ENCODE measurements at regions of chr12 and their contacts with region 1.

Region 1: GRCh38 chr12:68331869-68332727 is at the start of gene MDM1:
- DNase-seq: peak; percentile 98
- ATAC-seq: peak; percentile 99
- H3K4me3 ChIP-seq: peak within 1 kb of the TSS; percentile 71 to 81 (median 78)
- H3K27ac ChIP-seq: peak within 1 kb of the TSS; percentile 31
- H3K4me1 ChIP-seq: peaks cover 44% of the 10 kb centered on the region
- H3K27me3 ChIP-seq: no peaks in the 10 kb centered on the region; a peak in 1 of 5 replicates
- CTCF ChIP-seq: no peak
- EP300 ChIP-seq: no peak
- POLR2A ChIP-seq: peak in 1 of 2 experiments; percentile 54; a peak in 2 of 4 replicates
- RAD21 ChIP-seq: no peak
- total RNA-seq, gene MDM1: 13.0 and 15.2 TPM in 2 replicates

Region 2: DNA sequence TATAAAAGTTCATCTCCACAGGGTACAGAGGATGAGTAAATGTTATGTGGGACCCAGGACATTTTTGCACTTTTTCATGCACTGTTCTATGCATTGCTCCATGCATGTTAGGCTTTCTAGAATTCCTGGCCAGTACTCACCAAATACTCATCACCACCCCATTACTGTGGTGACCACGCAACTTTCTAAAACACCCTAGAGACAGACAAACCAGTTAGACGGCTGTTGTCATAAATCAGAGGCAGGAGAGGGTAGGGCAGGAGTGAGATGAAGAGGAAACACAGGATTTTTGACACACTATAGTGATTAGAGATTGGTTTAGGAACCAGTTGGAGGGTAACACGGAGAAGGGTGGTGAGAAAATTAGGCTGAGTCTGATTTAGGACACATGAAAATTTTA is 231.9 kb before region 1 on chr12:
- CTCF ChIA-PET with region 1: no interaction called
- POLR2A ChIA-PET with region 1: no interaction called
- in situ Hi-C with region 1: no loop called
- intact Hi-C with region 1: no loop called
- DNase-seq: no peak
- ATAC-seq: no peak
- H3K4me3 ChIP-seq: no peak overlapping the region
- H3K27ac ChIP-seq: no peak overlapping the region
- H3K4me1 ChIP-seq: no peaks in the 10 kb centered on the region
- H3K27me3 ChIP-seq: no peaks in the 10 kb centered on the region
- CTCF ChIP-seq: no peak
- EP300 ChIP-seq: no peak
- POLR2A ChIP-seq: no peak
- RAD21 ChIP-seq: no peak

Region 3: DNA sequence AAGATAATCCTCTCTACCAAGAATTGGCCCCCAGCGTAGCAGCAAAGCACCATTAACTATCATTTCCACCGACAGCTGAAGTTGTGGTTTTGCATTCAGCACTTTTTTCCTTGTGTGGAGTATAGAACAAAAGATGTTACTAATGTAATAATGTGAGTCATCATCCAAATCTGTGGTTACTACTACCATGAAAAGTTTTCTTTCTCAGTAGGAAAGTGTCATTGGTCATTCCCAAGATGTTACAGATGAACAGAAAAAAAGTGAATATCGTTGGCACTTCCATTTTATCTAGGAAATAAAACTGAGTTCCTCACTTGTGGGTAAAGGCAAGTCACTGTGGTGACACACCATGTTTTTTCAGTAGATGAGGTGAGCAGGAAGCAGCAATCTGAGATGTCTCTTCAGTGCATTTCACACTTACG is 142.3 kb before region 1 on chr12:
- CTCF ChIA-PET with region 1: no interaction called
- POLR2A ChIA-PET with region 1: no interaction called
- in situ Hi-C with region 1: no loop called
- intact Hi-C with region 1: no loop called
- DNase-seq: no peak
- ATAC-seq: no peak
- H3K4me3 ChIP-seq: no peak overlapping the region
- H3K27ac ChIP-seq: no peak overlapping the region
- H3K4me1 ChIP-seq: no peaks in the 10 kb centered on the region
- H3K27me3 ChIP-seq: no peaks in the 10 kb centered on the region; a peak in 1 of 5 replicates
- CTCF ChIP-seq: no peak
- EP300 ChIP-seq: no peak
- POLR2A ChIP-seq: no peak
- RAD21 ChIP-seq: no peak

Region 4: GRCh38 chr12:68259318-68259940 is 72.7 kb before region 1 on chr12:
- CTCF ChIA-PET with region 1: no interaction called
- POLR2A ChIA-PET with region 1: no interaction called
- in situ Hi-C with region 1: no loop called
- intact Hi-C with region 1: no loop called
- DNase-seq: no peak
- ATAC-seq: no peak
- H3K4me3 ChIP-seq: no peak overlapping the region
- H3K27ac ChIP-seq: no peak overlapping the region
- H3K4me1 ChIP-seq: no peaks in the 10 kb centered on the region
- H3K27me3 ChIP-seq: no peaks in the 10 kb centered on the region; a peak in 1 of 5 replicates
- CTCF ChIP-seq: no peak
- EP300 ChIP-seq: no peak
- POLR2A ChIP-seq: no peak
- RAD21 ChIP-seq: no peak

Region 5: DNA sequence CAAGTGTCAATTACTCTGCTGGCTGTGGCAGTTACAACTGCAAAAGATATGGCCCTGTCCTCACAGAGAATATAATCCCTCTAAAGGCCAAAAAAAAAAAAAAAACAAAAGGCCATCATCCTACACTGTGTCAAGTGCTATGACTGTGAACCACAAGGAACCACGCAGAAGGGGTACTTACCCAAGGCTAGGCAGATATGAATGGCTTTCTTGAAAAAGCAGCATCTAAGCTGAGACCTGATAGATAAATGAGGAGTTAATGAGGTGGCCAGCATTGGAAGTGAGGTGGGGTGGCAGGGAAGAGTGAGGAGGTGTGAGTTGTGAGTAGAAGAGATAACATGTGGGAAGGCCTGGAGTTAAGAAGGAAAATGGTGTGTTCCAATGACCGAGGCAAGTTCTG is 62.3 kb before region 1 on chr12:
- CTCF ChIA-PET with region 1: no interaction called
- POLR2A ChIA-PET with region 1: no interaction called
- in situ Hi-C with region 1: no loop called
- intact Hi-C with region 1: no loop called
- DNase-seq: no peak
- ATAC-seq: no peak
- H3K4me3 ChIP-seq: no peak overlapping the region
- H3K27ac ChIP-seq: no peak overlapping the region
- H3K4me1 ChIP-seq: no peaks in the 10 kb centered on the region
- H3K27me3 ChIP-seq: peaks cover 3 to 4% of the 10 kb centered on the region in 2 experiments; a peak in 2 of 5 replicates
- CTCF ChIP-seq: no peak
- EP300 ChIP-seq: no peak
- POLR2A ChIP-seq: no peak
- RAD21 ChIP-seq: no peak

Region 6: GRCh38 chr12:68342966-68343365 is 10.9 kb after region 1 on chr12:
- CTCF ChIA-PET with region 1: no interaction called
- POLR2A ChIA-PET with region 1: interaction called, 12 read pairs
- in situ Hi-C with region 1: no loop called
- intact Hi-C with region 1: loop called (anchors 1 kb)
- DNase-seq: no peak
- ATAC-seq: no peak
- H3K4me3 ChIP-seq: no peak overlapping the region
- H3K27ac ChIP-seq: no peak overlapping the region
- H3K4me1 ChIP-seq: peaks cover 52% of the 10 kb centered on the region
- H3K27me3 ChIP-seq: no peaks in the 10 kb centered on the region
- CTCF ChIP-seq: no peak
- EP300 ChIP-seq: no peak
- POLR2A ChIP-seq: no peak
- RAD21 ChIP-seq: no peak

Region 7: GRCh38 chr12:68364893-68365725 is 33.0 kb after region 1 on chr12:
- CTCF ChIA-PET with region 1: no interaction called
- POLR2A ChIA-PET with region 1: interaction called, 3 read pairs
- in situ Hi-C with region 1: no loop called
- intact Hi-C with region 1: loop called (anchors 2 kb)
- DNase-seq: peak; percentile 72
- ATAC-seq: peak; percentile 99
- H3K4me3 ChIP-seq: peak overlapping the region; percentile 43 to 78 (median 66)
- H3K27ac ChIP-seq: peak overlapping the region; percentile 57
- H3K4me1 ChIP-seq: peaks cover 13% of the 10 kb centered on the region; the same call in 1 of the 2 replicates
- H3K27me3 ChIP-seq: no peaks in the 10 kb centered on the region; a peak in 1 of 5 replicates
- CTCF ChIP-seq: peak; percentile 27
- EP300 ChIP-seq: no peak; a peak in 1 of 4 replicates
- POLR2A ChIP-seq: peak; percentile 54 to 58; a peak in 3 of 4 replicates
- RAD21 ChIP-seq: no peak; the same call in 1 of the 2 replicates

Region 8: DNA sequence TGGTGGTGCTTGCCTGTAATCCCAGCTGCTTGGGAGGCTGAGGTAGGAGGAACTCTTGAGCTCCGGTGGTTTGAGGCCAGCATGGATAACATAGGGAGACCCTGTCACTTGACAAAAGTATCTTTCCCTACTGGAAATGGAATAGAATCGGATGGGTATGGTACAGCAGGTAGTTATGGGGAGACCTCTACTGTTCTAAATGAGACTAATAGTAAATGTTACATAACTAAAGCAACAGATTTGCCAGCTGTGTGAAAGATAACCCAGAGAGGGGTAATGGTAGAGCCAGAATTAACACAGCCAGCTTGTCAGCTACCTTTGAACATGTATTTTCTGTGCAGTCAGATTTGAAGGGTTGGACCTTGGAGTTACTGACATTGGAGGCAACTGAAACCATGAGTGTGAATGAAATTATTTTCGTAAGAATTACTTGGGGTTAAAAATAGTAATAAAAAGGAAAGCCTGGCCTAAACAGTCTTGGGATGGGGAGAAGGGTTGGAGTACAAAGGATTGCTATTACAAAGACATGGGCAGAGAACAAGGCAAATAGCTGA is 333.0 kb after region 1 on chr12:
- CTCF ChIA-PET with region 1: no interaction called
- POLR2A ChIA-PET with region 1: no interaction called
- in situ Hi-C with region 1: no loop called
- intact Hi-C with region 1: loop called (anchors 10 kb)
- DNase-seq: no peak
- ATAC-seq: peak; percentile 51; the same call in 2 of the 3 replicates
- H3K4me3 ChIP-seq: no peak overlapping the region
- H3K27ac ChIP-seq: no peak overlapping the region
- H3K4me1 ChIP-seq: no peaks in the 10 kb centered on the region
- H3K27me3 ChIP-seq: no peaks in the 10 kb centered on the region
- CTCF ChIP-seq: peak; percentile 40
- EP300 ChIP-seq: no peak
- POLR2A ChIP-seq: no peak
- RAD21 ChIP-seq: no peak